B cell (primary cell): ENCODE measurements at regions of chr1 and their contacts with region 1.

Region 1: GRCh38 chr1:92749024-92749634 is 35.8 kb downstream of the EVI5 start:
- DNase-seq: peak; percentile 68
- ATAC-seq: peak; percentile 70
- H3K4me3 ChIP-seq: no peak overlapping the region
- H3K4me3 Mint-ChIP-seq: no peak overlapping the region
- H3K27ac ChIP-seq: no peak overlapping the region
- H3K27ac Mint-ChIP-seq: no peak overlapping the region
- H3K4me1 ChIP-seq: no peaks in the 10 kb centered on the region
- H3K4me1 Mint-ChIP-seq: peaks cover 8% of the 10 kb centered on the region
- H3K27me3 ChIP-seq: no peaks in the 10 kb centered on the region
- H3K27me3 Mint-ChIP-seq: no peaks in the 10 kb centered on the region
- CTCF ChIP-seq: peak; percentile 79

Region 2: DNA sequence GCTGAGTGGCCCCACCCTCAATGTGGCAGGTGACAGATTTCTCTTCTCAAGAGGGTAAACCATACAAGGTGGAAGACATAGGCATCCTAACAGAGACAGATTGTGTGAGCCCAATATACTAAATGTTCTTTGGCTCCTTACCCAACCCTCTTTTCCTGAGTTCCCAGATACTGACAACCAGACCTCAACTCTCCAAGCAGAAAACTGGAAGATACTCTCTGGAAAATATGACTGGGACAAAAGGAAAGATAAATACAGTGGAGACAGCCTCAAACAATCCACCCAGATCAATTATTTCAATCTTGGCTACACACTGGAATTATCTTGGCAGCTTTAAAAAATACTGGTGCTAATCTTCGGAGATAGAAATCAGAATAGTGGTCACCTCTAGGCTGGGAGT is 29.2 kb after region 1 on chr1:
- CTCF ChIA-PET with region 1: interaction called, 14 read pairs
- POLR2A ChIA-PET with region 1: no interaction called
- intact Hi-C with region 1: no loop called
- DNase-seq: no peak
- ATAC-seq: no peak
- H3K4me3 ChIP-seq: no peak overlapping the region
- H3K4me3 Mint-ChIP-seq: no peak overlapping the region
- H3K27ac ChIP-seq: no peak overlapping the region
- H3K27ac Mint-ChIP-seq: no peak overlapping the region
- H3K4me1 ChIP-seq: peaks cover 0 to 6% of the 10 kb centered on the region in 2 donors
- H3K4me1 Mint-ChIP-seq: peaks cover 24% of the 10 kb centered on the region
- H3K27me3 ChIP-seq: no peaks in the 10 kb centered on the region
- H3K27me3 Mint-ChIP-seq: no peaks in the 10 kb centered on the region
- CTCF ChIP-seq: no peak

Region 3: DNA sequence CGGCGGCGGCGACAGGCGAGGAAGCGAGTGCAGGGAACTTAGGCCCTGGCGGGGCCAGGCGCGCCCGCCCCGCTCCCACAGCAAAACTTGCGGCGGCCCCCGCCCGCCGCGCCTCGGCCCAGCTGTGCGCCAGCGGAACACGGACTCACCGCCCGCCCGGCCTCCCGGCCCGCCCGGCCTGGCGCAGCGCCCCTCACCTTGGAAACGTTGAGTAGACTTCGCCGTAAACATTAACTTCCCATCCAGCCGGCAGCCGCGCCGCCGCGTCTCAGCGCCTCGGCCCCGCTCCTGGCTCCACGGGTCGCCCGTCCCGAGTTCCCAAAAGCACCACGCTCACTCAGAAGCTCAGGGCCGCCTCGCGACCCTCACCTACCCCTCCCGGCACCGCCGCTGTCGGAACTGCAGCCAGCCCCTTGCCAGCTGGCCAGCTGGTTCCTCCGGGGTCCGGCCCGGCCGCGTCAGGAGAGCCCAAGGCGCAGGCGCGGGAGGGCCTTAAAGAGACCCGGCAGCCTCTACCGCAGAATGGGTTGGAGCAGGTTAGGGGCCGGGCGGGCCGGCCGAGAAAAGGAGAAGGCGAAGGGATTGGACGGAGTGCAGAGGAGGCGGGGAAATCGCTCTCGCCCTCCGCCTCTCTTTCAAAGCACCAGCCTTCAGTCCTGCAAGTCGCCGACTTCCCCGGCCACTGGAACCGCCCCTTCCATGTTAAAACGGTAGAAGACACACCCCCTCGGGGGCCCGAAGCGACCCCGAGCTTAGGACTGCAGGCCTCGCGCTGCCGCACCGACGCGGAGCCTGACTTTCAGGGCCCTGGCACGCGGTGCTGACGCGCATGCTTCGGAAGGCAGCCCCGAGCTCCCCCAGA is 35.7 kb after region 1 on chr1 and contains the start of gene EVI5:
- CTCF ChIA-PET with region 1: interaction called, 9 read pairs
- POLR2A ChIA-PET with region 1: interaction called, 4 read pairs
- intact Hi-C with region 1: loop called (anchors 1 kb)
- DNase-seq: peak; percentile 95
- ATAC-seq: peak; percentile 89
- H3K4me3 ChIP-seq: peak within 1 kb of the TSS; percentile 54 to 87 (median 71)
- H3K4me3 Mint-ChIP-seq: peak within 1 kb of the TSS; percentile 94
- H3K27ac ChIP-seq: peak within 1 kb of the TSS; percentile 80 to 94
- H3K27ac Mint-ChIP-seq: peak within 1 kb of the TSS; percentile 95
- H3K4me1 ChIP-seq: peaks cover 7 to 17% of the 10 kb centered on the region in 2 donors
- H3K4me1 Mint-ChIP-seq: peaks cover 26% of the 10 kb centered on the region
- H3K27me3 ChIP-seq: no peaks in the 10 kb centered on the region
- H3K27me3 Mint-ChIP-seq: no peaks in the 10 kb centered on the region
- CTCF ChIP-seq: no peak
- total RNA-seq, gene EVI5: 35.4 and 36.3 TPM in 2 replicates

Region 4: GRCh38 chr1:92792340-92792782 is 43.2 kb after region 1 on chr1:
- CTCF ChIA-PET with region 1: interaction called, 11 read pairs
- POLR2A ChIA-PET with region 1: no interaction called
- intact Hi-C with region 1: no loop called
- DNase-seq: no peak
- ATAC-seq: no peak
- H3K4me3 ChIP-seq: no peak overlapping the region
- H3K4me3 Mint-ChIP-seq: no peak overlapping the region
- H3K27ac ChIP-seq: no peak overlapping the region
- H3K27ac Mint-ChIP-seq: no peak overlapping the region
- H3K4me1 ChIP-seq: no peaks in the 10 kb centered on the region
- H3K4me1 Mint-ChIP-seq: no peaks in the 10 kb centered on the region
- H3K27me3 ChIP-seq: peaks cover 0 to 2% (median 0%) of the 10 kb centered on the region in 4 experiments
- H3K27me3 Mint-ChIP-seq: peaks cover 5% of the 10 kb centered on the region
- CTCF ChIP-seq: no peak

Region 5: DNA sequence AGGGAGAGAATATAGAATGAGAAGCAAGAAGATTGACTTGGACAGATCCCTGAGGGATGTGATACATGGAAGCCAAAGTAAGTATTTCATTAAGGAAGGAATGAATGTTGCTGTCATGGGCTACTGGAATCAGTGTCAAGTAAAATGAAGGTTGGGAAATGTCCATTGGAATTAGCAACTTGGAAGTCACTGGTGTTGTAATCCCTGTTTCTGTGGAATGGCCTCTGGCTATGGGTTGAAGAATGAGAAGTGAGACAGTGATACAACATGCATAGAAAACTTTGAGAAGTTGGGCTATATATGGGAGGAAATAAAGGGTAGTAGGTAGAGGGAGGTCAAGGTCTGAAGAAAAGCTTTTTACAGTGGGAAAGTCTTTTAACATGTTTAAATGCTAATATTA is 486.1 kb after region 1 on chr1:
- CTCF ChIA-PET with region 1: no interaction called
- POLR2A ChIA-PET with region 1: interaction called, 11 read pairs
- intact Hi-C with region 1: no loop called
- DNase-seq: no peak
- ATAC-seq: no peak
- H3K4me3 ChIP-seq: no peak overlapping the region
- H3K4me3 Mint-ChIP-seq: no peak overlapping the region
- H3K27ac ChIP-seq: no peak overlapping the region
- H3K27ac Mint-ChIP-seq: no peak overlapping the region
- H3K4me1 ChIP-seq: no peaks in the 10 kb centered on the region
- H3K4me1 Mint-ChIP-seq: no peaks in the 10 kb centered on the region
- H3K27me3 ChIP-seq: no peaks in the 10 kb centered on the region
- H3K27me3 Mint-ChIP-seq: no peaks in the 10 kb centered on the region
- CTCF ChIP-seq: no peak